Sigmoid colon (tissue), 7 donors: ENCODE measurements at regions of chr10 and their contacts with region 1.

Region 1: DNA sequence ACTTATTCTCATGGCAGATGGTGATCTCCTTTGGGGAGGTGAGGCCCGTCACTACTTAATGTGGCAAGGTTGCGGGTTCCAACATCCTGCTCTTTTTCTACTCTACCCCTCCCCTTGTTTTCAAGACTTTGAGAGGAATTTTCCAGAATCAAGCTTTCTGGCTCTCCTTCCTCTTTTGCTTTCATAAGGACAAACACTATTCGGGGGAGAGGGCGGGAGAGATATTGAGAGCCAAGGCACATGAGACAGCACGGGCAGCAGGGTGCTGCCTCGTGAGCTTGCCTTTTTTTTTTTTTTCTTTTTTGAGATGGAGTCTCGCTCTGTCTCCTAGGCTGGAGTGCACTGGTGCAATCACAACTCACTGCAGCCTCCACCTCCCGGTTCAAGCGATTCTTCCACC is 6.9 kb upstream of the PFKFB3 start:
- DNase-seq: peak; percentile 83
- H3K4me3 ChIP-seq: no peak overlapping the region
- H3K27ac ChIP-seq: peak overlapping the region; percentile 40 to 75 (median 57)
- H3K4me1 ChIP-seq: peaks cover 0 to 42% (median 29%) of the 10 kb centered on the region in 4 donors
- H3K27me3 ChIP-seq: no peaks in the 10 kb centered on the region
- CTCF ChIP-seq: no peak
- EP300 ChIP-seq: peak in 1 of 4 donors; percentile 46
- POLR2A ChIP-seq: no peak

Region 2: DNA sequence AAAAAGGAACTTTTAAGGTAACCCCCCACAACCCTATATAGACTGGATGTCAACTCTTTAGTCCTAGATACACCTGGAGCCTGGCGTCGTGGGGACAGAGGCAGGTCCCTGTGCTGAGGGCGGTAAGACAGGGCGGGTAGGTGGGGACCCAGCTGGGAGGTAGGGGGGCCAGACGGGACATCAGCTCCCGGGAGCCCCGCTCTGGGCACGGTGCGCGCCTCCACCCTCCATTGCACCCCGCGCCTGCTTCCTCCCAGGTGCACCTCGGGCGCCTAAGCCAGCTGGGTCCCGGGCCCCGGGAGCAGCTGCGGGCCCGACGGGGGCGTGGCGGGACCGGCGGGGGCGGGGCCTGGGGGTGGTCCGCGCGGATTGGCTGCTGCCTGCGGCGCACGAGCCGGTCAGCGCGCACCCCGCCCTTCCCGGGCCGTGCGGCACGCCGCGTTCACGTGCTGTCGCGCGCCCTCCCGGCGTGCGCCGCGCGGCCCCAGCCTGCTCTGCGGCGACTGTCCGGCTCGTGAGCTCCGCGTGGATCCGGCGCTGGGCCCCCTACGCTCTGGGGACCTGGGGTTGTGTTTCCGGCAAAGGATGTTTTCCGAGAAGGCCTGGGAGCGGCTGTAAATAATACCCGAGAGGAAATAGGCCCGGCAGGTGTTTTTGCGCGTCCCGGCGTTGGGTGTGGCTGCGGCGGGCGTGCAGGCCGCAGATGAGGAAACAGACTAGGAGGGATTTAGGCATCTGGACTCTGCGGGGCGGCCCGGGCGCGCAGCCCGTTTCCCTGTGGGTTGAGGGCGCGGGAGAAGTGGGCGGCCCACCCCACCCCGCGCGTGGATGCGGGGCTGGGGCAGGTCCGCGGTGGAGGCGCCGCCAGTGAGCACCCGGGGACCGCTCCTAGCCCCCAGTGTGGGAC is 32.2 kb before region 1 on chr10:
- intact Hi-C with region 1: loop called (anchors 2 kb)
- DNase-seq: peak; percentile 95
- H3K4me3 ChIP-seq: peak overlapping the region; percentile 62 to 73 (median 66)
- H3K27ac ChIP-seq: peak overlapping the region; percentile 90 to 97 (median 94)
- H3K4me1 ChIP-seq: peaks cover 0 to 38% (median 33%) of the 10 kb centered on the region in 4 donors
- H3K27me3 ChIP-seq: no peaks in the 10 kb centered on the region
- CTCF ChIP-seq: no peak
- EP300 ChIP-seq: peak in 2 of 4 donors; percentile 33 to 57
- POLR2A ChIP-seq: peak; percentile 52 to 61